Activated T-helper 1 cell treated with anti-CD3 and anti-CD28 coated beads, Interleukin-12 subunit alpha, Interleukin-12 subunit beta, Interleukin-2, Interleukin-4 antibody, amounts not matched to agents 30 ng/mL and 10 ng/mL and 1 ng/mL, durations not matched to agents 14 hours and 24 hours and 36 hours (primary cell): ENCODE measurements at regions of chr10 and their contacts with region 1.

Region 1: DNA sequence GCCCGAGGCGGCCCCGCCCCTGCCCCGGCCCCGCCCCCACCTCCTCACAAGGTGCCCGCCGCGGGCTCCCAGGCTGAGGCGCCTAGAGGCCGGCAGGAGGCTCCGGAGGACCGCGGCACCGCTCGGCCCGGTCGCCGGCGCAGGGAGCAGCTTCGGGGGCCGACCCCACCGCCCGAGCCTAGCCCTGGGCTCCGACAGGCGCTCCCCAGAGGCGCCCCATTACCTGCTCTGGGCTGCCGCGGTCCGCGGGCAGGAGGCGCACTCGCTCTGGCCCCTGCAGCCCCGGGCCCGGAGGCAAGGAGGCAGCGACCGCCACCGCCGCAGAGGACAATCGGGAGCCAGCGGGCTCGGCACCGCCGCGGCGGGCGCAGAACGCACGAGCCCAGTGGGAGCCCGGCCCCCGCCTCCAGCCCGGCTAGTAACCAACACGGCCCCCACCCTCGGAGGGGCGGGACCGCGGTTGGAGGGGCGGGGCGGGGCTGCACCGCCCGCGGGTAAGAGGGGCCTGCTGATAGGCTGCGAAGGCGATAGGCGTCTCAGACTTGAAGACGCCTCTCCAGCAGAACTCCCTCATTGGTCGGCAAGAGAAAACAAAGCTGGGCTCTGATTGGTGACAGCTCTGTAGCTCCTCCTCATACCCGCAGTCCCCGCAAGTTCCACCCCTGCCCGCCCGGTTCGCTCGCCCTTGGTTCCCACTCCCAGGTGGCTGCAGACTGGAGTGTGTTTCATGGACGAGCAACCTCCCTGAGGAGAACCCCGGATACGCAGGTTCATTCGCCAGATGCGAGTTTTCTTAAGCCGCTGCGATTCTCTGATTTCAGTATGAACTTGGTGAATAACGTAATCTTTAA is at the start of gene MPP7:
- DNase-seq: peak; percentile 93
- H3K4me3 Mint-ChIP-seq: peak within 1 kb of the TSS; percentile 85
- H3K27ac Mint-ChIP-seq: peak within 1 kb of the TSS; percentile 41
- H3K4me1 Mint-ChIP-seq: peaks cover 32% of the 10 kb centered on the region
- H3K27me3 Mint-ChIP-seq: peaks cover 34% of the 10 kb centered on the region
- total RNA-seq, gene MPP7: 0.15 and 0.29 TPM in 2 replicates

Region 2: DNA sequence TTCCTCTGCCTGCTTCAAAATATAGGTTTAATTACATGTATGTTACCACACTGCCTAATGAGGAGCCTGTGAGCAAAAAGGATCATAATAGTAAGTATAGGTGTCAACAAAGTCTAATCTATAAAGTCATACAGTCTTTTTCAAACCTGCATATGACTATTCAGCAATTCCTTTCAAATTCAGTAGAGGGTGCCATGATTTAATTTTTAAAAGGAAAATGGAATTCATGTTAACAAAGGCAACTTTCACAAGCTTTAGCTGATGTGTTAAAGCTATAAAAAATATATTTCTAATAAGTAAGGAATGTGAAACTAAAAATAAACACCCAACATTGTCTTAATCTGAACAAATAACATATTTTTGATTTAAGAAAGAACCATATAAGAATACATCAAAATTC is 52.1 kb before region 1 on chr10:
- intact Hi-C with region 1: loop called (anchors 2 kb)
- DNase-seq: no peak
- H3K4me3 Mint-ChIP-seq: no peak overlapping the region
- H3K27ac Mint-ChIP-seq: no peak overlapping the region
- H3K4me1 Mint-ChIP-seq: peaks cover 13% of the 10 kb centered on the region
- H3K27me3 Mint-ChIP-seq: no peaks in the 10 kb centered on the region

Region 3: GRCh38 chr10:28334296-28334695 is 31.4 kb after region 1 on chr10:
- intact Hi-C with region 1: loop called (anchors 1 kb)
- DNase-seq: peak; percentile 66
- H3K4me3 Mint-ChIP-seq: peak overlapping the region; percentile 81
- H3K27ac Mint-ChIP-seq: peak overlapping the region; percentile 99
- H3K4me1 Mint-ChIP-seq: peaks cover 67% of the 10 kb centered on the region
- H3K27me3 Mint-ChIP-seq: peaks cover 21% of the 10 kb centered on the region

Region 4: GRCh38 chr10:28381903-28382347 is 79.1 kb after region 1 on chr10:
- intact Hi-C with region 1: loop called (anchors 1 kb)
- DNase-seq: peak; percentile 58
- H3K4me3 Mint-ChIP-seq: no peak overlapping the region
- H3K27ac Mint-ChIP-seq: no peak overlapping the region
- H3K4me1 Mint-ChIP-seq: peaks cover 24% of the 10 kb centered on the region
- H3K27me3 Mint-ChIP-seq: peaks cover 22% of the 10 kb centered on the region

Region 5: DNA sequence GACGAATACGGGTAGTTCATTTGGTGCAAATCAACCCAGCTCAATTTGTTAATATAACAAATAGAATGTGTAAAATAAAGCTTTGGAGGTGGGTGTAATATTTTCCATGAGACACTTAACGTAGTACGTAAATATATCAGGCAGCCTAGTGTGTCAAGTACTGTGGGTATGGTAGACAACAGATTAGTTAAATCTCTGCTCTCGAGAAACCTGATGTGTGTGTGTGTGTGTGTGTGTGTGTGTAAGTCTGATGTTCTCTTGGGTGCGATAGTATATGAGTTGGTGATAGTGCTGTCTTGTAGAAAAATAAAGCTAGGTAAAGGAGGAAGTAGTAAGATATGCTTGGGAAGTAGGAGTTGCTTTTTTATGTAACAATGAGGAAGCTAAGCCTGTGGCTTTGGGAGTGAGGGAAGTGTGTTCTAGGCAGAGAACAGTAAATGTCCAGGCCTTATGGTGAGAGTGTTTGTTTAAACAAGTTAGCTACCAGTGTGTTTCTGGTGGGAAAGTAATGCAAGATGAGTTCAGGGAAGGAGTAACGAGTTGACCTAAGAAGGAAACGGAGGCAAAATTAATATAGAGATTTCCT is 256.2 kb after region 1 on chr10:
- intact Hi-C with region 1: no loop called
- DNase-seq: no peak
- H3K4me3 Mint-ChIP-seq: no peak overlapping the region
- H3K27ac Mint-ChIP-seq: peak overlapping the region; percentile 4
- H3K4me1 Mint-ChIP-seq: peaks cover 49% of the 10 kb centered on the region
- H3K27me3 Mint-ChIP-seq: no peaks in the 10 kb centered on the region